ENCODE measurements at regions of chr15 and their contacts with region 1.

Region 1: DNA sequence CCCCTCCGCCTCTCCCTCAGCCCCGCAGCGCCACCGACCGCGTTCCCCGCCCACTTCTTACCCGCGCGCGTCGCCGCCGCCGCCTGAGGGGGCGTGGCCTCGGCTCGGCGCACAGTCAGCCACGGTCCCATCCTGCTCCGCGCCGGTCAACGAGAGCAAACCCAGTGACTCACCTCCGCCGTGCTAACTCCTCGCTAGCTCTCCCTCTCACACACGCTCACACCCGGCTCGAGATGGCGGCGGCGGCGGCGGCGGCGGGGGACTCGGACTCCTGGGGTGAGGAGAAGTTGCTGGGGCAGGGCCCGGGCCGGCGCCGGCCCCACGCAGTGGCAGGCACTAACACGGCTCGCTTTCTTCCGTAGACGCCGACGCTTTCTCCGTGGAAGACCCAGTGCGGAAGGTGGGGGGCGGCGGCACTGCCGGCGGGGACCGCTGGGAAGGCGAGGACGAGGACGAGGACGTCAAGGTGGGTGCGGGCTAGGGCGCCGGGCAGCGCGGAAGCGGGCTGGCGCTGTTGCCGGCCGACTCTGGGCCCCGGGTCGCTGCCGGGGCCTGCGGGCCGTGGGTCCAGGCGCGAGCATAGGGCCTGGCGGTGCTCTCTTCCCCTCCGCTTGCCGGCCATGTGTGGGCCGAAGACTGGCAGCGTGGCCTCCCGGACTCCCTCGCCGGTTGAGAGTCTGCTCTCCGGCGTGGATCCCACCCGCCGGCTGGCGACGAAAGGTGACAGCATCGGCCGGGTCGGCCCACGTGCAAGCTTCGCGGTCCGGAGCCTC is at the start of gene EIF3J:
- DNase-seq: peak; percentile 92 to 96 (median 95)
- ATAC-seq: peak; percentile 95
- H3K4me3 ChIP-seq: peak within 1 kb of the TSS; percentile 96
- H3K4me3 Mint-ChIP-seq: peak within 1 kb of the TSS; percentile 83 to 98 (median 94)
- H3K27ac ChIP-seq: peak within 1 kb of the TSS; percentile 97
- H3K27ac Mint-ChIP-seq: peak within 1 kb of the TSS; percentile 87 to 98 (median 95)
- H3K4me1 ChIP-seq: peaks cover 27 to 29% of the 10 kb centered on the region in 2 donors
- H3K4me1 Mint-ChIP-seq: peaks cover 35 to 60% (median 51%) of the 10 kb centered on the region in 7 donors
- H3K27me3 ChIP-seq: no peaks in the 10 kb centered on the region
- H3K27me3 Mint-ChIP-seq: no peaks in the 10 kb centered on the region
- total RNA-seq, gene EIF3J: 52.9 to 83.4 (median 66.5) TPM

Region 2: GRCh38 chr15:43510200-43511011 is 1026.7 kb before region 1 on chr15:
- CTCF ChIA-PET with region 1: no interaction called
- POLR2A ChIA-PET with region 1: no interaction called
- intact Hi-C with region 1: loop called in 1 of 2 experiments (anchors 5 kb)
- DNase-seq: peak; percentile 91 to 96 (median 94)
- ATAC-seq: peak; percentile 97
- H3K4me3 ChIP-seq: peak overlapping the region; percentile 88
- H3K4me3 Mint-ChIP-seq: peak overlapping the region; percentile 89 to 100 (median 94)
- H3K27ac ChIP-seq: peak overlapping the region; percentile 76
- H3K27ac Mint-ChIP-seq: peak overlapping the region; percentile 92 to 99 (median 97)
- H3K4me1 ChIP-seq: peaks cover 14 to 17% of the 10 kb centered on the region in 2 donors
- H3K4me1 Mint-ChIP-seq: peaks cover 14 to 51% (median 28%) of the 10 kb centered on the region in 7 donors
- H3K27me3 ChIP-seq: no peaks in the 10 kb centered on the region
- H3K27me3 Mint-ChIP-seq: peaks cover 0 to 2% (median under 1%) of the 10 kb centered on the region in 5 donors

Region 3: GRCh38 chr15:44286814-44287452 is 250.2 kb before region 1 on chr15:
- CTCF ChIA-PET with region 1: interaction called, 3 read pairs
- POLR2A ChIA-PET with region 1: interaction called, 6 read pairs
- intact Hi-C with region 1: loop called (anchors 1 kb)
- DNase-seq: peak in 4 of 9 donors; percentile 9 to 30 (median 19)
- ATAC-seq: no peak
- H3K4me3 ChIP-seq: peak overlapping the region; percentile 85
- H3K4me3 Mint-ChIP-seq: peak overlapping the region; percentile 90 to 99 (median 96)
- H3K27ac ChIP-seq: peak overlapping the region; percentile 86
- H3K27ac Mint-ChIP-seq: peak overlapping the region; percentile 95 to 100 (median 99)
- H3K4me1 ChIP-seq: peaks cover 12 to 13% of the 10 kb centered on the region in 2 donors
- H3K4me1 Mint-ChIP-seq: peaks cover 30 to 50% (median 45%) of the 10 kb centered on the region in 7 donors
- H3K27me3 ChIP-seq: no peaks in the 10 kb centered on the region
- H3K27me3 Mint-ChIP-seq: peaks cover 0 to 17% (median 3%) of the 10 kb centered on the region in 5 donors

Region 4: DNA sequence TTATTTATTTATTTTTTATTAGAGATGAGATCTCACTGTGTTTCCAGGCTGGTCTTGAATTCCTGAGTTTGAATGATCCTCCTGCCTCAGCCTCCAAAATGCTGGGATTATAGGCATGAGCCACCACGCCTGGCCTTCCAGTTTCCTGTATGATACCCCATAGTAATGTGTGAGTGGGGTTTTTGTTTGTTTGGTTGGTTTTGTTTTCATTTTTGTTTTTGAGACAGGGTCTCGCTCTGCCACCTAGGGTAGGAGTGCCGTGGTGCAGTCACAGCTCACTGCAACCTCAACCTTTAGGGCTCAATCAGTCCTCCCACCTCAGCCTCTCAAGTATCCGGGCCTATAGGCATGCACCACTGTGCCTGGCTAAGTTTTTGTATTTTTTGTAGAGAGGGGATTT is 217.8 kb before region 1 on chr15:
- CTCF ChIA-PET with region 1: no interaction called
- POLR2A ChIA-PET with region 1: no interaction called
- intact Hi-C with region 1: no loop called
- DNase-seq: no peak
- ATAC-seq: no peak
- H3K4me3 ChIP-seq: no peak overlapping the region
- H3K4me3 Mint-ChIP-seq: no peak overlapping the region
- H3K27ac ChIP-seq: no peak overlapping the region
- H3K27ac Mint-ChIP-seq: no peak overlapping the region
- H3K4me1 ChIP-seq: no peaks in the 10 kb centered on the region
- H3K4me1 Mint-ChIP-seq: peaks cover 5 to 56% (median 26%) of the 10 kb centered on the region in 7 donors
- H3K27me3 ChIP-seq: no peaks in the 10 kb centered on the region
- H3K27me3 Mint-ChIP-seq: no peaks in the 10 kb centered on the region

Region 5: GRCh38 chr15:44573386-44573785 is 36.2 kb after region 1 on chr15:
- CTCF ChIA-PET with region 1: no interaction called
- POLR2A ChIA-PET with region 1: no interaction called
- intact Hi-C with region 1: loop called in 1 of 2 experiments (anchors 5 kb)
- DNase-seq: no peak
- ATAC-seq: no peak
- H3K4me3 ChIP-seq: no peak overlapping the region
- H3K4me3 Mint-ChIP-seq: no peak overlapping the region
- H3K27ac ChIP-seq: peak overlapping the region; percentile 29
- H3K27ac Mint-ChIP-seq: peak overlapping the region in 4 of 9 donors; percentile 14 to 62 (median 33)
- H3K4me1 ChIP-seq: peaks cover 0 to 2% of the 10 kb centered on the region in 2 donors
- H3K4me1 Mint-ChIP-seq: peaks cover 4 to 11% (median 9%) of the 10 kb centered on the region in 7 donors
- H3K27me3 ChIP-seq: no peaks in the 10 kb centered on the region
- H3K27me3 Mint-ChIP-seq: no peaks in the 10 kb centered on the region

Region 6: DNA sequence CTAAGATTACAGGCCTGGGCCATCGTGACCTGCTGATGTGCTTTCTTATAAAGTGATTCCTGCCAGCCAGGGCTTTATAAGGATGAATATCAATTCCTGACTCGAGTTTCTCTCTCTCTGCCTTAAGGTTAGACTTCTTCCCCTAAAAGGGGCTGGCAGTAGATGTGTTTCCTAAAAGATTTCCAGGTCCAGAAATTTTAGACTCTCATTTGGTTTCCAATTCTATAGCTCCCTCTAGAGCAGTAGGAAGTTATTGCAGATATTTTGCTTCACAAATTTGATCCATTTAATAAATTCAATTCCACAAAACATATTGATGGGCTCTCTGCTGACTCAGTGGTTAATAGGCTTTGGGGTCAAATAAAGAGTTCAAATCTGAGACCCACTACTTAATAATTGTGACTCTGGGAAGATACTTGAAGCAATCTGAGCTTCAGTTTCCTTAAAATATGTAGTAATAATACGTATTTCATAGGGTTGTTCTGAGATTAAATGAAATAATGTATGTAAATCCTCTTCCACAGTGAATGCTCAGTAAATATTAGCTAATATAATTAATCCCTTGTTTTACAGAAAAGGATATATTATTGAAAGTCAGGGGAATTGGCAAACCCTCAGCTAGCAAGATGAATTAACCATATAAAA is 201.3 kb after region 1 on chr15:
- CTCF ChIA-PET with region 1: no interaction called
- POLR2A ChIA-PET with region 1: interaction called, 7 read pairs
- intact Hi-C with region 1: loop called in 1 of 2 experiments (anchors 5 kb)
- DNase-seq: peak in 6 of 9 donors; percentile 40 to 67 (median 60)
- ATAC-seq: peak; percentile 68
- H3K4me3 ChIP-seq: no peak overlapping the region
- H3K4me3 Mint-ChIP-seq: peak overlapping the region in 7 of 10 donors; percentile 49 to 67 (median 53)
- H3K27ac ChIP-seq: peak overlapping the region; percentile 54
- H3K27ac Mint-ChIP-seq: peak overlapping the region; percentile 23 to 95 (median 86)
- H3K4me1 ChIP-seq: peaks cover 42 to 56% of the 10 kb centered on the region in 2 donors
- H3K4me1 Mint-ChIP-seq: peaks cover 24 to 62% (median 56%) of the 10 kb centered on the region in 7 donors
- H3K27me3 ChIP-seq: no peaks in the 10 kb centered on the region
- H3K27me3 Mint-ChIP-seq: peaks cover 0 to 2% (median 0%) of the 10 kb centered on the region in 5 donors

Region 7: DNA sequence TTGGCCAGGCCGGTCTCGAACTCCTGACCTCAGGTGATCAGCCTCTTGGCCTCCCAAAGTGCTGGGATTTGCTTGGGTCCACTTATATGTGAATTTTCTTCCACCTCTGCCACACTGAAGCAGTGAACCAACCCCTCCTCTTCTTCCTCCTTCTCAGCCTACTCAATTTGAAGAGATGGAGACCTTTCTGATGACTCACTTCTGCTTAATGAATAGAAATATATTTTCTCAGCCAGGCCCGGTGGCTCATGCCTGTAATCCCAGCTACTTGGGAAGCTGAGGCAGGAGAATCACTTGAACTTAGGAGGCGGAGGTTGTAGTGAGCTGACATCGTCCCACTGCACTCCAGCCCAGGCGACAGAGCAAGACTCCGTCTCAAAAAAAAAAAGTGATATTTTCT is 888.0 kb after region 1 on chr15:
- CTCF ChIA-PET with region 1: no interaction called
- POLR2A ChIA-PET with region 1: no interaction called
- intact Hi-C with region 1: no loop called
- DNase-seq: no peak
- ATAC-seq: no peak
- H3K4me3 ChIP-seq: no peak overlapping the region
- H3K4me3 Mint-ChIP-seq: no peak overlapping the region
- H3K27ac ChIP-seq: no peak overlapping the region
- H3K27ac Mint-ChIP-seq: no peak overlapping the region
- H3K4me1 ChIP-seq: no peaks in the 10 kb centered on the region
- H3K4me1 Mint-ChIP-seq: peaks cover 0 to 2% (median 0%) of the 10 kb centered on the region in 7 donors
- H3K27me3 ChIP-seq: no peaks in the 10 kb centered on the region
- H3K27me3 Mint-ChIP-seq: peaks cover 0 to 11% (median 0%) of the 10 kb centered on the region in 5 donors